ENCODE measurements at regions of chr2 and their contacts with region 1.

Region 1: DNA sequence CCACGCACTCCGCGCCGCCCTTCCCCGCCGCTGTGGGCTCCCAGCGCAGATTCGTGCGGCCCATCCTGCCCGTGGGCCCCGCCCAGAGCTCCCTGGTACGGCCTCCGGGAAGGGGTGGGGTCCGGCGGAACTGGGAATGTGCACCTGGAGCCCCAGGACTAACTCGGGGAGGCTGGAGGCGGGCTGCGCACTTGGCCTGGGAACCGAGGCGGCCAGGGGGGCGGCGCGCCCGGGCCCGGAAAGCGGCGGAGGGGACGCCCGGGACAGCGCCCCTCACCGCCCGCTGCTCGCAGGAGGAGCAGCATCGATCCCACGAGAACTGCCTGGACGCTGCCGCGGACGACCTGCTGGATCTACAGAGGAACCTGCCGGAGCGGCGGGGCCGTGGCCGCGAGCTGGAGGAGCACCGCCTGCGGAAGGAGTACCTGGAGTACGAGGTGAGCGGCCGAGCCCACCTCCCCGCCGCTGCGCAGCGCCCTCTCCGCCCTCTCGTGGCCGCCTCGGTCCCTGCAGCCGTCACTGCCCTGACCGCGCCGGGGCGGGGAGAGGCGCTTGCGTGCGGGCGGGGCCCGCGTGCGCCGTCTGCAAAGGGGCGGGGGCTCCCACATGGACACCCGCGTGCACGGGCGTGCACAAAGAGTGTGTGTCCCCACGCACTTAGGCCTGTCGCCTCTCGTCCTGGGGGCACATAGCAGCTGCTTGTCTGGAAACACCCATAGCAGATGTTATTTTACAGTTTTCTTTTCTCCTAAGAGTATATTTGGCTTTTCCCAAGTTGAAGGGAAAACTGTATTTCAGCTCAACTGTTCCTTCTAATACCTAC is 25.2 kb downstream of the PSD4 start:
- DNase-seq: peak; percentile 61 to 86 (median 76)
- H3K4me3 ChIP-seq: peak overlapping the region; percentile 70
- H3K27ac ChIP-seq: peak overlapping the region; percentile 18 to 58
- H3K4me1 ChIP-seq: no peaks in the 10 kb centered on the region
- H3K27me3 ChIP-seq: no peaks in the 10 kb centered on the region
- CTCF ChIP-seq: peak; percentile 81 to 88 (median 87)
- EP300 ChIP-seq: no peak
- POLR2A ChIP-seq: no peak

Region 2: DNA sequence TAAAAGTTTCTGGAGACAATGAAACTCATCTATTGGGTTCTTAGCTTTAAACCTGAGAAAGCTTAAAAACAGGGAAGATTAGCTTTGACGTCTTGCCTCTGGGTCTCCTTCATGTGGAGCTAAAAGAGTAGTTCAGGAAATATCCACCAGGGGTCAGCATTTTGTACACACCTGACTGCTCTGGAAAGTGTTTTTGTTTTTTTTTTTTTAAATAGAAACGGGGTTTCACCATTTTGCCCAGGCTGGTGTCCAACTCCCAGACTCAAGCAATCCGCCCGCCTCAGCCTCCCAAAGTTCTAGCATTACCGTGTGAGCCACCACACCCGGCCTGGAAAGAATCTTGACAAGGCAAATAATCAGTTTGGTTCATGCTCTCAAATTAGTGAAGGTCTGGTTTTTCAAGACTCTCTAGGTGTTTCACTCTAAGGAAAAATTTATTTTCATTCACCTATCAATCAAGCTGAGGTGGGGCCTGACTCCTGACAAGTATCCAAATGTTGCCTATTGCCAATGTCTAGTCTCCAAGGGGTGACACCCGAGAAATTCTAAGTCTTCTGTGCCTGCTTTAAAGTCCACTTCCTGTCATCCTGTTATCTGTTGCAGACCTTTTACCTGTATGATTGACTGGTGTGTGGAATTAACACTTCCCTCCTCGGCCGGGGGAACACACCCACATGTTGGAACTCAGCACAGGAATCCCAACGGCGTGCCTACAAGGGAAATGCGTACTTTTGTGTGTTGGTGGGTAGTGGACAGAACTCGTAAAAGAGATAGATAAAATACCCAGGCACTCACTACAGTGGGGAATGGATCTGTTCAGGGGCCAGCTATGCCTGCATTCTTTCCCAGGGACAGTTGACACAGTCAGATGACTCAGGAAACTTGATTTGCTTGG is 60.3 kb before region 1 on chr2:
- intact Hi-C with region 1: loop called in 1 of 4 experiments (anchors 5 kb)
- DNase-seq: peak in 1 of 5 donors; percentile 27
- H3K4me3 ChIP-seq: no peak overlapping the region
- H3K27ac ChIP-seq: no peak overlapping the region
- H3K4me1 ChIP-seq: no peaks in the 10 kb centered on the region
- H3K27me3 ChIP-seq: no peaks in the 10 kb centered on the region
- CTCF ChIP-seq: peak; percentile 17 to 57 (median 28)
- EP300 ChIP-seq: no peak
- POLR2A ChIP-seq: no peak